Posterior vena cava (tissue), 2 donors: ENCODE measurements at regions of chr2 and their contacts with region 1.

Region 1: DNA sequence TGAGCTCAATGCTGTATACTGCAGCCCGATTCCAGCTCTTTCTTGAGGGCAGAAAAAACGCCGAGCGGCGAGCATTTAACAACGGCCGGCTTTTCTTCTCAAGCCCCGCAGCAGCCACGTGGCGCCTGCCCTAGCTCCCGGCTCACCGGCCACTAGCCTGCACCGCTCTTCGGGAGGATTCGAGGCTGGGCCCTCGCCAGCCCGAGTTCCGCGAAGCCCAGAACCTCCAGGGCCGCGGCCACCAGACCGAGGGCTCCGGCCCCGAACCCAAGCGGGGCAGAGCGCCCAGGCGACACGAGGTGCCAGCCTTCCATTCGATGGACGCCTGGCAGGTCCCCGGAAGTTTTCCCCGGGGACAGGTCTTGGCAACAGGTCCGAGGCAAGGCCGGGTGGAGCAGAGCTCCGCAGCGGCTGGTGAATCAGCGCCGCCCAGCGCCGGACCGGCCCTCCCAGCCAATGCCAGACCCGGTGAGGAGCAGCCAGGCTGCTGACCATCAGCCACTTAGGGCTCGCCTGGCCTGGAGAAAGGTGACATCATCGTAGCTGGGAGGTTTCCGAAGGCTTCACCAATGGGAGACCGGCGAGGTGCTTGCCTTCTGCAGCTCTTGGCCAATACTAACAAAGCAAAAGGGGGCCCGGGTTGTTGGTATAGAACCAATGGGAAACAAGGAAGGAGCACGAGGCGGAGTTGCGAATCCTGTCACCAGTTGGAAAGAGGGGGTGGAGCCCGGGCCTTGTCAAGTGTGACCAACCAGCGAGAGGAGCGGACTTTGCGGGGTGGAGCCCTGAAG is 544 bp upstream of the MXD1 start:
- DNase-seq: peak; percentile 99

Region 2: DNA sequence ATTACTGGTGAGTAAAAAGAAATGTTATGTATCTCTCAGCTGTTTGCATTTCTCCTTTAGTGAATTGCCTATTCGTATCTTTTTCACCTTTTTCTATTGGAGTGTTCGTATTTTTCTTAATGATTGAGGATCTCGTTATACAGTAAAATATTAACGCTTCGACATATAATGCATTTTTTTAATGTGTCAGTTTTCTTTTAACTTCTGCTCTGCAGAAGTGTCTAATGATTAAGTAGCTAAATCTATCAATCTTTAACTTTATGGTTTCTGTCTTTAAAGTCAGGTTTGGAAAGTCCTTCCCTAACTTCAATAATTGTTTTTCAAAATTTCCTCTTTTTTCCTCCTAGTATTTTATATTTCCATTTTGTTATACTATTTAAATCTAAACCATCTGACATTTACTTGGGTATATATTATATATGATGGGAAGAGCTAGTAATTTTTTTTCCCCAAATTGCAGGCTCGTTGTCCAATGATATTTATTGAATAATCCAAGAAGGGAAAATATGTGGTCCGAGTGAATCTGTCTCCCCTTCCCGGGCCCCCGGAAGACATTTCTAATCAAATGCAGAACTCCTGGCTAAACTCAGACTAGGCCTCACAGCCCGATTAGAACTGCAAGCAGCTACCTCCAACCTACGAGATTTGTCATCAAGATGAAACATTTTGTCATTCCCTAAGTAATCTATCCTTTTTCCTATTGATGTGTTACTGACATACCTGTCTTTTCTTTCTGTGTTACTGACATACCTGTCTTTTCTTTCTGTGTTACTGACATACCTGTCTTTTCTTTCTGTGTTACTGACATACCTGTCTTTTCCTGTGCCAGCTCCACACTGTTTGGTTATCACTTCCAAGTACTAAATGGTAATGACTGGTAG is 190.1 kb after region 1 on chr2:
- intact Hi-C with region 1: no loop called
- DNase-seq: no peak

Region 3: GRCh38 chr2:70142590-70143313 is 228.4 kb after region 1 on chr2:
- intact Hi-C with region 1: loop called (anchors 2 to 5 kb)
- DNase-seq: peak; percentile 100

Region 4: GRCh38 chr2:70301344-70302194 is 387.2 kb after region 1 on chr2 and contains the start of gene FAM136A:
- intact Hi-C with region 1: loop called in 1 of 2 experiments (anchors 5 kb)
- DNase-seq: peak; percentile 96
- total RNA-seq, gene FAM136A: 19.2 to 24.7 TPM